G401 (cell line): ENCODE measurements at regions of chr12 and their contacts with region 1.

Region 1: DNA sequence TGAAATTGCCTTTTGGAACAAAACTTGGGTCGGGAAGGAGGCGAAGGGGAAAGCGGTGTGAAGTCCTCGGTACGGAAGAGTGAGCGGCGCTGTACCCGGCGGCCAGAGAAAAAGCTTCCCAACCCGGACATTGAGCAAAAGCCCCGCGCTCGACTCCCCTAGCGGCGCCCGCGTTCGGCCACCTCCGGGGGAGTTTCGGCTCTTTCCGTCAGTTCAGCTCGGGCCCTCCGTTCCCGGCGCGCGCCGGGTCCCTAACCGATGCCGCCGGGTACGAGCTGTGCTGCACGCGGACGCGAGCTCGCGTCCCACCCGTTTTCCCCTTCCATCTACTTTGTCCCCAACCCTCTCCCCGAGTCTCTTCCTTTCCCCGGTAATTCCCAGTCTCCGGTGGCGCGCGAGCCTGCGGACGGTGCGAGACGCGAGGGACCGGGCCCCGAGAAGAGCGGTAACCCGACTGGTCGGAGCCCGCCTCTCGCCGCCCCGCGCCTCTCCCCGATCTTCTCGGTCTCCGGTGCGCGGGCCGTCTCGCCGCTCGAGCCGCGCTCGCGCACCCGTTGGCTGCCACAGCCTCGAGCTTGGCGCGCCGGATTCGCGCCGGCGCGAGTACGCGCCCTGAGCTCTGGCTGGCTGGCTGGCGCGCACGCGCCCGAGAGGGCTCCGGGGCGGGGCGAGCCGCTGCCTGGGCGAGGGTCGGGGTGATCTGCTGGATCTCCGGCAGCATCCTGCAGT is 446 bp upstream of the SPATS2 start:
- DNase-seq: peak; percentile 85

Region 2: GRCh38 chr12:49503674-49504180 is 136.9 kb after region 1 on chr12:
- in situ Hi-C with region 1: loop called (anchors 25 kb)
- DNase-seq: peak; percentile 16